PC-9 (cell line): ENCODE measurements at regions of chr2 and their contacts with region 1.

Region 1: GRCh38 chr2:46179037-46179652 is 118.1 kb upstream of the EPAS1 start:
- DNase-seq: peak; percentile 82 to 99
- H3K4me3 ChIP-seq: no peak overlapping the region; the same call in 1 of the 2 replicates
- H3K27ac ChIP-seq: peak overlapping the region; percentile 94
- H3K4me1 ChIP-seq: peaks cover 58% of the 10 kb centered on the region
- H3K27me3 ChIP-seq: no peaks in the 10 kb centered on the region
- CTCF ChIP-seq: no peak; the same call in 1 of the 2 replicates

Region 2: GRCh38 chr2:46117379-46117778 is 61.8 kb before region 1 on chr2:
- CTCF ChIA-PET with region 1: no interaction called
- POLR2A ChIA-PET with region 1: no interaction called
- intact Hi-C with region 1: loop called (anchors 2 kb)
- DNase-seq: peak; percentile 38 to 75
- H3K4me3 ChIP-seq: no peak overlapping the region
- H3K27ac ChIP-seq: peak overlapping the region; percentile 67
- H3K4me1 ChIP-seq: peaks cover 49% of the 10 kb centered on the region
- H3K27me3 ChIP-seq: no peaks in the 10 kb centered on the region
- CTCF ChIP-seq: no peak

Region 3: GRCh38 chr2:46157072-46157965 is 21.8 kb before region 1 on chr2:
- CTCF ChIA-PET with region 1: no interaction called
- POLR2A ChIA-PET with region 1: no interaction called
- intact Hi-C with region 1: no loop called
- DNase-seq: no peak
- H3K4me3 ChIP-seq: no peak overlapping the region
- H3K27ac ChIP-seq: no peak overlapping the region
- H3K4me1 ChIP-seq: peaks cover 32% of the 10 kb centered on the region
- H3K27me3 ChIP-seq: no peaks in the 10 kb centered on the region
- CTCF ChIP-seq: no peak

Region 4: GRCh38 chr2:46229134-46230063 is 50.3 kb after region 1 on chr2:
- CTCF ChIA-PET with region 1: no interaction called
- POLR2A ChIA-PET with region 1: no interaction called
- intact Hi-C with region 1: loop called (anchors 1 kb)
- DNase-seq: no peak
- H3K4me3 ChIP-seq: no peak overlapping the region
- H3K27ac ChIP-seq: no peak overlapping the region
- H3K4me1 ChIP-seq: peaks cover 33% of the 10 kb centered on the region
- H3K27me3 ChIP-seq: no peaks in the 10 kb centered on the region
- CTCF ChIP-seq: no peak

Region 5: GRCh38 chr2:46364797-46365457 is 185.8 kb after region 1 on chr2:
- CTCF ChIA-PET with region 1: no interaction called
- POLR2A ChIA-PET with region 1: no interaction called
- intact Hi-C with region 1: loop called (anchors 2 kb)
- DNase-seq: peak; percentile 35 to 49
- H3K4me3 ChIP-seq: no peak overlapping the region
- H3K27ac ChIP-seq: no peak overlapping the region
- H3K4me1 ChIP-seq: 0 out of 2 replicates have a peak, but pooled peaks cover 12% of the 10 kb centered on the region
- H3K27me3 ChIP-seq: no peaks in the 10 kb centered on the region
- CTCF ChIP-seq: peak; percentile 98